Pancreas (tissue), 10 donors: ENCODE measurements at regions of chr6 and their contacts with region 1.

Region 1: GRCh38 chr6:13908955-13909381 is 15.8 kb upstream of the RNF182 start:
- DNase-seq: peak in 4 of 6 donors; percentile 14 to 44 (median 29)
- ATAC-seq: peak; percentile 58 to 94 (median 92)
- H3K4me3 ChIP-seq: no peak overlapping the region
- H3K27ac ChIP-seq: no peak overlapping the region
- H3K4me1 ChIP-seq: no peaks in the 10 kb centered on the region
- H3K27me3 ChIP-seq: peaks cover 0 to 5% (median 2%) of the 10 kb centered on the region in 4 donors
- CTCF ChIP-seq: peak; percentile 30 to 60 (median 60)

Region 2: DNA sequence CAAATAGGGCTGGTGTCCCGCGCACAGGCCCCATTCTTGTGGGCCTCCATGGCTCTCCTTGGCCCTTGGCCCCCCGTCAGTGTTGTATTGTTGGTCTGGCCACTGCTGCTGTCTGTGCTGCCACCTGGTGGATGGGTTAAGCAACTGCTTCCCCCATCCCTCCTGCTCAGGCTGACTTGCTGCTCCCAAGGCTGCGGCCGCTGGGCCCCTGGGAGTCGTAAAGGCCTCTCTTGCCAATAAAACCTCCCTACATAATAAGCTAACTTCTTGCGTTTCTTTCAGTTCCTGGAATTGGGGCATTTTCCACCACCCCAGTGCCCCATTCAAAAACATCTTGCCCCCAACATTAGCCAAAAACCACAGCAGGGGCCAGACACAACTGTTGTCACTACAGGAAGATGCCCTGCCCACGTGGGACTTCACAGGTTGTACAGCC is 235.7 kb after region 1 on chr6:
- intact Hi-C with region 1: loop called in 1 of 3 experiments (anchors 5 kb)
- DNase-seq: peak; percentile 31 to 82 (median 70)
- ATAC-seq: peak; percentile 66 to 96 (median 88)
- H3K4me3 ChIP-seq: no peak overlapping the region
- H3K27ac ChIP-seq: no peak overlapping the region
- H3K4me1 ChIP-seq: no peaks in the 10 kb centered on the region
- H3K27me3 ChIP-seq: no peaks in the 10 kb centered on the region
- CTCF ChIP-seq: peak; percentile 89 to 93 (median 89)